Mucosa of descending colon (tissue), 3 donors: ENCODE measurements at regions of chr7 and their contacts with region 1.

Region 1: DNA sequence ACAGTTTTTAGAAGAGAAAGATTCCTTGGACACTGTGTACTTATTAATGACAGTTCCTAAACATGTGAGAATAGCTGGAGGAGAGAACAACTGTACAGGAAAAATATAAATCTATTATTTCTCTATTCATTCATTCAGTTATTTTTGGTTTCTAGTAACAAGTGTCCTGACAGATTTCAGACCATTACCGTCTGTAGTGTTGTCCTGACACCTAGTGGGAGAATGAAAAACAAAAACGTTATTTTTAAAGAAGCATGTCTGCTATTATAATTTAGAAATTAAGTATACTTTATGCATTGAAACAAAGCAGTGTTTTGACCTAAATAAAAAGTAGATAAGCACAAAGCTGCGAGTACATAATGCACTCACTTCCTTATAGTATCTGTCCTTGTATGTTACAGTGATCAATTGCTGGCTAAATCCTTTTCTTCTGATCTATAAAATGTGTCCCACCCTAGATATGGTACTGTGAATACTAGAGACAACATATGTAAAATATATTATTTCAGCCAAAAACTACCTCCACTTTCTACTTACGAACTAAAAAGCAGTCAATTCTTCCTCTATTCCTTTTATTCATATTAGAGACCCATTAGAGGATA is 575.6 kb downstream of the ARL4A start:
- DNase-seq: no peak
- ATAC-seq: peak; percentile 36
- H3K4me3 ChIP-seq: no peak overlapping the region
- H3K4me1 ChIP-seq: no peaks in the 10 kb centered on the region
- CTCF ChIP-seq: no peak

Region 2: GRCh38 chr7:12524794-12525386 is 738.1 kb before region 1 on chr7:
- intact Hi-C with region 1: loop called in 1 of 2 experiments (anchors 5 kb)
- DNase-seq: no peak
- ATAC-seq: peak; percentile 52
- H3K4me3 ChIP-seq: no peak overlapping the region
- H3K4me1 ChIP-seq: no peaks in the 10 kb centered on the region
- CTCF ChIP-seq: peak; percentile 11

Region 3: GRCh38 chr7:12623897-12624498 is 639.0 kb before region 1 on chr7:
- intact Hi-C with region 1: loop called in 1 of 2 experiments (anchors 5 kb)
- DNase-seq: no peak
- ATAC-seq: peak; percentile 59
- H3K4me3 ChIP-seq: no peak overlapping the region
- H3K4me1 ChIP-seq: no peaks in the 10 kb centered on the region
- CTCF ChIP-seq: peak; percentile 49

Region 4: DNA sequence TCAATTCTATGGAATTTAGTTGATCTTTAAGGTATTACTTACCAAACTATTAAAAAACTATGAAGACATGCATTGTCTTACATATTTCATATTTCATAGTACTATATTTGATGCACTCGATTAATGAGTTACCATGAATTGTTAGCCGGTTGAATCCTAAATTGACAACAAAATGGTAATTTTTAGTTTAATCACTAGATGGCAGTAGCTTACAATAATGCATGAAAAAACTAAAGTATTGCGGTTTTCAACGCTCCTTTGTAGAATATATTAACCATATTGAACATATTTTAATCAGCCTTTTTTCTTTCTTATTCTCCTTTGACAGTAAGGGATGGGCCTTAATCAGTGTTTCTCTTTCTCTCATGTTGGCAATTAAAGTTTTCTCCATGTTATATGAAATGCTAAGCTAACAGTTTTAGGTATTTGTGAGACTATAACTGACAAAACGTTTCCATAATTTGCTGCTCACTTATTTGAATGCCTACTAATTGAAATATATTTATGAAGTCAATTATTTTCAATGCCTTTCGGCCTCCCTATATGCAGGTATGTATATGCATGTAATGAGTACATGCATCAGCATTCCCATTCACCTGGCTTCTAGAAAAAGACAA is 624.1 kb before region 1 on chr7:
- intact Hi-C with region 1: loop called in 1 of 2 experiments (anchors 10 kb)
- DNase-seq: no peak
- ATAC-seq: peak; percentile 50
- H3K4me3 ChIP-seq: no peak overlapping the region
- H3K4me1 ChIP-seq: no peaks in the 10 kb centered on the region
- CTCF ChIP-seq: peak; percentile 33

Region 5: GRCh38 chr7:13169356-13169755 is 93.7 kb before region 1 on chr7:
- intact Hi-C with region 1: no loop called
- DNase-seq: no peak
- ATAC-seq: no peak
- H3K4me3 ChIP-seq: no peak overlapping the region
- H3K4me1 ChIP-seq: no peaks in the 10 kb centered on the region
- CTCF ChIP-seq: no peak